BJ (cell line): ENCODE measurements at regions of chr7 and their contacts with region 1.

Region 1: DNA sequence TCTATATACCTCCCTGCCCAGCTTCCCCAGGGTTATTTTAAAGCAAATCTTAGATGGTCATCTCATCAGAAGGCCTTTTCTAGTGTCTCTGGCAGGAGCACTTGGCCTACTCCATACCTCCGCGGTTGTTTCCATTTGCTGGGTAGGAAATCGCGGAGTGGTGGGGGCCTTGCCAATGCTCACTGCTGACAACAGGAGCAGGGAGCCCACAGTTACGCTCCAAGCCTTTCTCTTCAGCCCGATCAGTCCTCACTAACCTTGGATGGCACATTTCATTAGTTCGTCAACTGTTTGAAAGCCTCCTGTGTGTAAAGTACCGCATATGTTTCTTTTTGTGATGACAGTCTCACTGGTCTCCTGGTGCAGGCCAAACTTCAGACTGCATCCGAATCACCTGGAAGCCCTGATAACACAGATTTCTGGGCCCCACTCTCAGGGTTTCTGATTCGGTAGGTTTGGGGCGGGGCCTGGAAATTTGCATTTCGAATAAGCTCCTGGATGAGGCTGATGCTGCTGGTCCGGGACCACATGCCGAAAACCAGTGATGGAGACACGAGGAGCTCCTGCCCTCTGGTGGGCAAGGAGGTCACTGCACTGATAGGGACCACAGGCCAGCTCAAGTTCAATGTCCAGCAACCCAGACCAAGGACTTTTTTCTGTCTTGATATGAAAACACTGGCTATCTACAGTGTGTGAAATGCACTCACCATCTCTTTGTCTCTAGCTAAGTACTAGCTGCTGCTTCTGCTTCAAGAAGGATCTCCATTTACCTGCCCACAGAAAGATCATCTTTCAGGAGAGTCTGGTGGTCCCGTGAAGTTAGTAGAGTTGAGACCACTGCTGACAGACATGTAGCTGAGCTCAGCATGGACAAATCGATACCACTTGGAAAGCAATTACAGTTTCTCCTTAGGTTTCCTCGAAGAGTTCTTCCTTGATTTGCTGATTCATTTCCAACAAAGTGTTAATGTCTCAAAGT is 14.0 kb downstream of the LRGUK start:
- DNase-seq: peak; percentile 4
- H3K4me3 ChIP-seq: no peak overlapping the region
- H3K27me3 ChIP-seq: 0 out of 2 replicates have a peak, but pooled peaks cover 1% of the 10 kb centered on the region
- CTCF ChIP-seq: peak; percentile 95

Region 2: GRCh38 chr7:134126966-134127848 is 14.0 kb before region 1 on chr7 and contains the start of gene LRGUK:
- CTCF ChIA-PET with region 1: interaction called, 14 read pairs
- POLR2A ChIA-PET with region 1: interaction called, 5 read pairs
- DNase-seq: peak; percentile 10
- H3K4me3 ChIP-seq: peak within 1 kb of the TSS; percentile 54
- H3K27me3 ChIP-seq: peaks cover 2% of the 10 kb centered on the region; the same call in 1 of the 2 replicates
- CTCF ChIP-seq: no peak
- polyA plus RNA-seq, gene LRGUK: 0.05 TPM in 1 of 2 replicates, not detected in the other

Region 3: GRCh38 chr7:134154581-134155130 is 13.5 kb after region 1 on chr7:
- CTCF ChIA-PET with region 1: interaction called, 18 read pairs
- POLR2A ChIA-PET with region 1: no interaction called
- DNase-seq: no peak
- H3K4me3 ChIP-seq: no peak overlapping the region
- H3K27me3 ChIP-seq: no peaks in the 10 kb centered on the region
- CTCF ChIP-seq: no peak

Region 4: GRCh38 chr7:134420424-134421125 is 279.4 kb after region 1 on chr7:
- CTCF ChIA-PET with region 1: interaction called, 22 read pairs
- POLR2A ChIA-PET with region 1: no interaction called
- DNase-seq: no peak
- H3K4me3 ChIP-seq: no peak overlapping the region
- H3K27me3 ChIP-seq: no peaks in the 10 kb centered on the region
- CTCF ChIP-seq: peak; percentile 69